K562 (cell line): ENCODE measurements at regions of chr1 and their contacts with region 1.

Region 1: GRCh38 chr1:223811634-223812415 is 33.9 kb downstream of the TP53BP2 start:
- DNase-seq: peak in 1 of 4 experiments; percentile 58
- ATAC-seq: peak; percentile 81
- H3K4me3 ChIP-seq: no peak overlapping the region
- H3K27ac ChIP-seq: no peak overlapping the region
- H3K4me1 ChIP-seq: no peaks in the 10 kb centered on the region; a peak in 2 of 5 replicates
- H3K27me3 ChIP-seq: no peaks in the 10 kb centered on the region
- CTCF ChIP-seq: peak; percentile 45 to 87 (median 59); a peak in 4 of 6 replicates
- EP300 ChIP-seq: no peak
- POLR2A ChIP-seq: no peak
- RAD21 ChIP-seq: peak; percentile 96 to 98

Region 2: GRCh38 chr1:223695941-223696340 is 115.9 kb before region 1 on chr1:
- CTCF ChIA-PET with region 1: no interaction called
- POLR2A ChIA-PET with region 1: no interaction called
- in situ Hi-C with region 1: no loop called
- intact Hi-C with region 1: loop called (anchors 5 kb)
- DNase-seq: no peak
- ATAC-seq: no peak
- H3K4me3 ChIP-seq: no peak overlapping the region
- H3K27ac ChIP-seq: no peak overlapping the region
- H3K4me1 ChIP-seq: peaks cover 10 to 15% of the 10 kb centered on the region in 2 experiments
- H3K27me3 ChIP-seq: no peaks in the 10 kb centered on the region
- CTCF ChIP-seq: no peak
- EP300 ChIP-seq: no peak
- POLR2A ChIP-seq: no peak
- RAD21 ChIP-seq: no peak

Region 3: DNA sequence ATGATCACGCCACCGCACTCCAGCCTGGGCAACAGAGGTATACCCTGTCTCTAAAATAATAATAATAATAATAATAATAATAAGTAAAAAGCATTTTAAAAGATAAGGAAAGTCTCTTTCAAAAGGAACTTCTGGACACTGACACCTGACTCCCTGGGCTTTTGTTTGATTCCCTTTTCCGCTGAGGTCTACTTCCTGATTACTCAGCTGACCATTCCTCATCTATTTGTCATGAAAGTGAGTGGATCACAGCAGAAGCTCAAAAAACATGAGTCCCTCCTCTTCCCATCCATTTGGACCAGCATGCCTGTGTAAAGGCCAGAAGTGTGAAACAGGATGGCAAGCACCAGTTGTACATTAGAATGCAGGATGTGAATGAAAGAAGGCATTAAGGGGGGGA is 240.9 kb after region 1 on chr1:
- CTCF ChIA-PET with region 1: interaction called, 13 read pairs
- POLR2A ChIA-PET with region 1: interaction called, 3 read pairs
- in situ Hi-C with region 1: no loop called
- intact Hi-C with region 1: loop called (anchors 5 kb)
- DNase-seq: no peak
- ATAC-seq: no peak
- H3K4me3 ChIP-seq: no peak overlapping the region
- H3K27ac ChIP-seq: no peak overlapping the region
- H3K4me1 ChIP-seq: no peaks in the 10 kb centered on the region; a peak in 2 of 5 replicates
- H3K27me3 ChIP-seq: no peaks in the 10 kb centered on the region
- CTCF ChIP-seq: no peak
- EP300 ChIP-seq: no peak
- POLR2A ChIP-seq: no peak
- RAD21 ChIP-seq: no peak

Region 4: DNA sequence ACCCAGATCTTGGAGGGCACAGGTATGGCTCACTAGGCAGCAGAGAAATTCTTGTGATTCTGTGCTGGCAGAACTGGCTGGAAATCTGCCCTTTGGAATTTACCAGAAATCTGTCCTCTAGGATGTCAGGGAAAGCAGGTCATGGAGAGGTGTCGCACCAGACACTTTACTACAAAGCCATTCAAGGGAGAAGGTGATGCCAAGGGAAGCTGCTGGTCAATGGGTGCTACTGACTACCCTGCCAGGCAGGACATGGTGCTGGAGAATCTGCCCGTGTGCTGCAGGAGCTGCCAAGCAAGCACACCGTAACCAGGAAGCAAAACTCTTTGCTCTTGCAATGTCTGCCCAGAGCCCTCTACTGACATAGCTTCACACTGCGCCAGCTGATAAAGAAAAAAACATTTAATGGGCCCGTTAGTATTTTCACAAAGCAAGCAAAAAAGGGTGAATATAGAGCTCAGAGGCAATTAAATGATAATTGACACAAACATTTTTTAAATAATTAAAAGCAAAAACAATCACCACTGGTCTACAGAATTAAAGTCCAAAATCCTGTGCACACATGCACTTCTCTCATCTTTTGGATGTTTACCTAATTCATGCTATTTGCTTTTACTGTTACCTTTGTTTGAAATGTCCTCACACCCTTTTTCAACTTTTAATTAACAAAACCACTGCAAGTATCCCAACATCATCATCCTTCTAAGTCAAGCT is 294.9 kb after region 1 on chr1:
- CTCF ChIA-PET with region 1: no interaction called
- POLR2A ChIA-PET with region 1: interaction called, 4 read pairs
- in situ Hi-C with region 1: no loop called
- intact Hi-C with region 1: loop called (anchors 5 kb)
- DNase-seq: peak in 3 of 4 experiments; percentile 23 to 70 (median 62)
- ATAC-seq: peak; percentile 96
- H3K4me3 ChIP-seq: no peak overlapping the region
- H3K27ac ChIP-seq: no peak overlapping the region; the same call in 2 of the 3 replicates
- H3K4me1 ChIP-seq: peaks cover 0 to 3% of the 10 kb centered on the region in 2 experiments; a peak in 2 of 5 replicates
- H3K27me3 ChIP-seq: no peaks in the 10 kb centered on the region
- CTCF ChIP-seq: peak; percentile 64 to 69 (median 67)
- EP300 ChIP-seq: no peak
- POLR2A ChIP-seq: no peak
- RAD21 ChIP-seq: peak; percentile 62 to 77